Cardiac septum (tissue), 1 donor: ENCODE measurements at regions of chrX and their contacts with region 1.

Region 1: GRCh38 chrX:153599192-153600031 is 473 bp upstream of the CCNQ start:
- DNase-seq: peak; percentile 94

Region 2: DNA sequence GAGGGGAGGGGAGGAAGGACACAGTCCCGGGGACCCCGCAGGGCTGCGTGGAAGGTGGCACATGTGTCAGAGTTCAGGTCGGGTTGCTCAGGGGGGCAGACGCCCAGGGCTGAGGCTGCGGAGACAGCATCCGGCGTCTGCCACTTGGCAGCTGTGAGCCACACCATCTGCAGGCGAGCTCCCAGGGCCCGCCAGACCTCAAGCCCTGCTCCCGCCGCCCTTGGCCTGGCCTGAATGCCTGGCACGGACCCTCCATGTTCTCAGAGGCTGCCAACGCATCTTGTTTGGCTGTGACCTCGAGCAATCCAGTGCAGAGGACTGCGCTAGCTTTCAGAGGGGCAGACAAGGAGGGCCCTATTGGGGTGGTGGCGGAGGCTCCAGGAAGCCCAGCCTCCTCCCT is 99.5 kb before region 1 on chrX:
- intact Hi-C with region 1: no loop called
- DNase-seq: no peak

Region 3: DNA sequence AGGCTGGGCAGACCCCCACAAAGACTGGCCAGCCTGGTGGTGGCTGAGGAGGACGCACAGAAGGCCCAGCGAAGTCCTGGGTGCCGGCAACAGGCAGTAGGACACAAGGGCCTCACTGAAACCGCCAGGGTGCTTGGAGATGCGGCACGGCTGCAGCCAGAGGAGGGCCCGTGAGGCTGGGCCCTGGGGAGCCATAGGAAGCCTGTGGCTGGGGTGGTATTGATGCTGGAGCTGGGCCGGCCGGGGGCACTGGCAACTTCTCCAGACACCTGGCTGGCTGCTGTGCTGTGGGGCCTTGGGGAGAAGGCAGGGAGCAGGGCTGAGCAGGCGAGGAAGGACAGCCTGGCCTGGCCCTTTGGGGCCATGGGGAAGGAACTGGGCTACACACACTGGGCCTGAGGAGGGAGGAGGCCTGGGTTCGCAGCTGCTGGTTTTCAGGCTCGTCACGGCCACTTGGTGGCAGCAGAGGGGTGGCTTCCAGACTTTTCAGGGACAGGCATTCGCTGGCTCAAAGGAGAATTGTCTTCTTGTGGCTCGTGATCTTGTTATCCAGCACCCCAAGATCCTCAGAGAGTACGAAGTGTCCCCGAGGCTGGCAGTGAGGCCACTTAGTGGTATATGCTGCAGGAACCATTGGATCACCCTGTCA is 44.8 kb before region 1 on chrX:
- intact Hi-C with region 1: loop called (anchors 2 kb)
- DNase-seq: no peak